H1 (cell line): ENCODE measurements at regions of chr11 and their contacts with region 1.

Region 1: GRCh38 chr11:62787005-62787759 is at the start of gene TMEM179B:
- DNase-seq: peak; percentile 93 to 98
- H3K4me3 ChIP-seq: peak within 1 kb of the TSS; percentile 77 to 97 (median 90)
- H3K27ac ChIP-seq: peak within 1 kb of the TSS; percentile 90
- H3K4me1 ChIP-seq: peaks cover 0 to 6% (median 2%) of the 10 kb centered on the region in 4 experiments; a peak in 4 of 7 replicates
- H3K27me3 ChIP-seq: no peaks in the 10 kb centered on the region
- CTCF ChIP-seq: peak; percentile 49 to 67 (median 64)
- EP300 ChIP-seq: peak in 1 of 2 experiments; percentile 71; a peak in 1 of 3 replicates
- POLR2A ChIP-seq: peak; percentile 92 to 94
- RAD21 ChIP-seq: peak; percentile 44 to 51
- total RNA-seq, gene TMEM179B: 16.3 and 18.6 TPM in 2 replicates

Region 2: GRCh38 chr11:62705880-62706849 is 81.0 kb before region 1 on chr11:
- CTCF ChIA-PET with region 1: interaction called, 3 read pairs
- POLR2A ChIA-PET with region 1: interaction called, 24 read pairs
- DNase-seq: peak; percentile 82 to 95
- H3K4me3 ChIP-seq: peak overlapping the region; percentile 64 to 83 (median 82)
- H3K27ac ChIP-seq: peak overlapping the region; percentile 65
- H3K4me1 ChIP-seq: peaks cover 7 to 34% (median 20%) of the 10 kb centered on the region in 4 experiments
- H3K27me3 ChIP-seq: no peaks in the 10 kb centered on the region
- CTCF ChIP-seq: no peak
- EP300 ChIP-seq: no peak
- POLR2A ChIP-seq: peak in 1 of 2 experiments; percentile 62; a peak in 2 of 3 replicates
- RAD21 ChIP-seq: no peak

Region 3: DNA sequence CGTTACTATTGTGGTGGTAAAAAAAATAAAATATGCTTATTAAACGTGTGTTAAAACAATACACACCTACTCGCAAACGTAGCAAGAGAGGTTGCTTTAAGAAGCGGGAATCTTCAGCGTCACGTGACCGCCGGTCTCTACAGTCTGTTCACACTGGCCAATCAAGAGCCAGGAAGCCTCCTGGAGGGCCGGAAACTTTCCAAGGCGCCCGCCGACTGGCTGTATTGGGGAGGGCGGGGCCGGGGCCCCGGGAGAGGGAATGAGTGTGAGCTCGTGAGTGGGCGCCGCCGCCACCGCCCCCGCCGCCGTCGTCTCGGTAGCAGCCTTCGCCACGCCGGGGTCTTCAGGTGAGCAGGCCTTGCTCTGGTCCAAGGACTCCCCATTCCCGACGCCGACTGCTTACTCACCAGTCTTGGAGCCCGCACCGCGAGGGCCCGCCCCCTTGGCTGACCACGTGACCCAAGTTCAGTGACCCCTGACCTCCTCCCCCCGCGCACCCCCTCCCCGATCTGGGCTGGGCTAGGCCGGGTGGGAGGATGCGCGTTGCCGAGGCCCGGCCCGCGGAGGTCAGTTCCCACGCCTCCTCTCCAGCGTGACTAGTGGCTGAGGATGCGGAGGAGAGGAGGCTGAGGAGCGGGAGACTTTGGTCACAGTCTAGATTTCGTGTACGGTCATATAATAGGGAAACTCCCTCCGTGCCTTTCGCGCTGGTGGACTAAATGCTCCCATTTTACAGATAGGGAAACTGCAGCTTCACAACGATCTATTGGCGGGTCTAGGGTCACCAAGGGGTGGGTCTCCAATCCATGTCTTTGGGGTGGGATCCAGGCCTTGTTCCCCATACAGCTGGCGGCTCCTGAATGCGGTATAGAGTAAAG is 15.8 kb before region 1 on chr11 and contains the start of gene TAF6L:
- CTCF ChIA-PET with region 1: interaction called, 94 read pairs
- POLR2A ChIA-PET with region 1: interaction called, 64 read pairs
- DNase-seq: peak; percentile 75 to 98
- H3K4me3 ChIP-seq: peak within 1 kb of the TSS; percentile 77 to 95 (median 92)
- H3K27ac ChIP-seq: peak within 1 kb of the TSS; percentile 72
- H3K4me1 ChIP-seq: peaks cover 0 to 9% (median 5%) of the 10 kb centered on the region in 4 experiments; a peak in 6 of 7 replicates
- H3K27me3 ChIP-seq: no peaks in the 10 kb centered on the region
- CTCF ChIP-seq: no peak
- EP300 ChIP-seq: no peak
- POLR2A ChIP-seq: peak; percentile 78 to 95
- RAD21 ChIP-seq: no peak
- total RNA-seq, gene TAF6L: 29.6 and 31.9 TPM in 2 replicates

Region 4: DNA sequence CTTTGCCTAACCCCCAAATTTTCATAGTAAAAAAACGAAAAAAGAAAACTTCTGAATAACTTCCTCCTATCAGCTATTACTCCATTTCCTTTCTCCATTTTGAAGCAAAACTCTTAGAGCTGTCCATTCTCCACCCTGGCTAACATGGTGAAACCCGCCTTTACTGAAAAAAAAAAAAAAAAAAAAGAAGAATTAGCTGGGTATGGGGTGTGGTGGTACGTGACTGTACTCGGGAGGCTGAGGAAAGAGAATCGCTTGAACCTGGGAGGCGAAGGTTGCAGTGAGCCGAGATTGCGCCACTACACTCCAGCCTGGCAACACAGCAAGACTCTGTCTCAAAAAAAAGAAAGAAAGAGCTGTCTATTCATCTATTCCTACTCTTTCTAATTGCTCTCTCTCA is 29.4 kb after region 1 on chr11:
- CTCF ChIA-PET with region 1: interaction called, 6 read pairs
- POLR2A ChIA-PET with region 1: interaction called, 11 read pairs
- DNase-seq: no peak
- H3K4me3 ChIP-seq: no peak overlapping the region
- H3K27ac ChIP-seq: no peak overlapping the region
- H3K4me1 ChIP-seq: no peaks in the 10 kb centered on the region
- H3K27me3 ChIP-seq: no peaks in the 10 kb centered on the region
- CTCF ChIP-seq: no peak
- EP300 ChIP-seq: no peak
- POLR2A ChIP-seq: no peak
- RAD21 ChIP-seq: no peak

Region 5: DNA sequence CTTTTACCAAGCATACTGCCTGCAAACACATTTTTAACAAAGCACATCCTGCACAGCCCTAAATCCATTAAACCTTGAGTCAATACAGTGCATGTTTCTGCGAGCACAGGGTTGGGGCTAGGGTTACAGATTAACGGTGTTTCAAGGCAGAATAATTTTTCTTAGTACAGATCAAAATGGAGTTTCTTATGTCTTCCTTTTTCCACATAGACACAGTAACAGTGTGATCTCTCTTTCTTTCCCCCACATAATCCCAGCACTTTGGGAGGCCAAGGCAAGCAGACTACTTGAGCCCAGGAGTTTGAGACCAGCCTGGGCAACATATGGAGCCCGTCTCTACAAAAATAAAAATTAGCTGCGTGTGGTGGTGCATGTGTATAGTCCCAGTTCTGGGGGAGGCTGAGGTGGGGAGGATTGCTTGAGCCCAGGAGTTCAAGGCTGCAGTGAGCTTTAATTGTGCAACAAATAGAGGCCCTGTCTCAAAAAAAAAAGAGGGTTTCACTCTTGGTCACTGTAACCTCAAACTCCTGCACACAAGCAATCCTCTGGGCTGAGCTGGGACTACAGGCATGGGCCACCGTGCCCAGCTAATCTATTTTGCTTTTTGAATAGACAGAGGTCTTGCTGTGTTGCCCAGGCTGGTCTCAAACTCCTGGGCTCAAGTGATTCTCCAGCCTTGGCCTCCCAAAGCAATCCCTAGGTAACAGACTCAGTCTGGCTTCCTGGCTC is 73.8 kb after region 1 on chr11:
- CTCF ChIA-PET with region 1: interaction called, 8 read pairs
- POLR2A ChIA-PET with region 1: interaction called, 150 read pairs
- DNase-seq: no peak
- H3K4me3 ChIP-seq: no peak overlapping the region
- H3K27ac ChIP-seq: no peak overlapping the region
- H3K4me1 ChIP-seq: peaks cover 0 to 10% (median 6%) of the 10 kb centered on the region in 4 experiments; a peak in 4 of 7 replicates
- H3K27me3 ChIP-seq: no peaks in the 10 kb centered on the region
- CTCF ChIP-seq: no peak
- EP300 ChIP-seq: no peak
- POLR2A ChIP-seq: no peak
- RAD21 ChIP-seq: no peak

Region 6: DNA sequence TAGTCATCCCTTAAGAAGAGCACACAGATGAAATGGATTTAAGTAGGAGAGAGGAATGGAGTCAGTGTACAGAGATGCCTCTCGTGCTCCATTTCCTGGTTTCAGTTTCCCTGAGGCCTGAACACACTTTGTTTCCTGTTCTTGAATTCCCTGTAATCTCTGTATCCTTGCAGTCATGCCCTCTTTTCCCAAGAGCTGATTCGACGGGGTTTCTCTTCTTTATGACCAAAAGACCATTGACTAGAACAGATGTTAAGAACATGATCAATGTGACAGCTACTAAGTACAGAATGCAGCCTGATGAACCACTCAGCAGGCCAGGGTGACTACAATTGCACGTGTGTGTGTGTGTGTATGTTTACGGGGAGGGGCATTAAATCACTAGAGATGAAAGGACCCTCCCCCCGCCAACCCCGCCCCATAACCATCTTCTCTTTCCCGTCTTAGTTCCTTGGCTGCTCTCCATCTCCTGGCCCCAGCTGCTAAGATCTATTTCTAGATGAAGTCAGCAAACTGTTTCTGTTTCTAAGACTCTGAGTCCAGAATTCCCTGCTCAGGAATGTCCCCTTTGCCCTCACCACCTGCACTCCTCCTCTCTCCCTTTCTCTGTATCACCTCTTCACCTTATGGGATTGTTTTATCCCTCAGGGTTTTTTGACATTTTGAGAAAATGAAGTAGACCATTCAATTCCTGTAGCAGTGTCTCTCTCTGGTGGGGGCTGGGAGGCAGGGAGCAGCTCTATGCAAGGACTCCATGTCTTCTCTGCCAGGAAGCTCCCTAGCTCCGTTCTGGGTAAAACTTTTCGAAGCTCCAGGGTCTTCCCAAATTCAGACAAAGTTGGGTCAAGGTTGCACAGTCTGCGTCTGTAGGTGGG is 171.6 kb after region 1 on chr11:
- CTCF ChIA-PET with region 1: no interaction called
- POLR2A ChIA-PET with region 1: no interaction called
- DNase-seq: no peak
- H3K4me3 ChIP-seq: no peak overlapping the region
- H3K27ac ChIP-seq: no peak overlapping the region
- H3K4me1 ChIP-seq: 0 out of 7 replicates have a peak, but pooled peaks cover 0 to 3% (median 0%) of the 10 kb centered on the region in 4 experiments
- H3K27me3 ChIP-seq: no peaks in the 10 kb centered on the region
- CTCF ChIP-seq: no peak
- EP300 ChIP-seq: no peak
- POLR2A ChIP-seq: no peak
- RAD21 ChIP-seq: no peak